ENCODE measurements at regions of chr10 and their contacts with region 1.

Region 1: DNA sequence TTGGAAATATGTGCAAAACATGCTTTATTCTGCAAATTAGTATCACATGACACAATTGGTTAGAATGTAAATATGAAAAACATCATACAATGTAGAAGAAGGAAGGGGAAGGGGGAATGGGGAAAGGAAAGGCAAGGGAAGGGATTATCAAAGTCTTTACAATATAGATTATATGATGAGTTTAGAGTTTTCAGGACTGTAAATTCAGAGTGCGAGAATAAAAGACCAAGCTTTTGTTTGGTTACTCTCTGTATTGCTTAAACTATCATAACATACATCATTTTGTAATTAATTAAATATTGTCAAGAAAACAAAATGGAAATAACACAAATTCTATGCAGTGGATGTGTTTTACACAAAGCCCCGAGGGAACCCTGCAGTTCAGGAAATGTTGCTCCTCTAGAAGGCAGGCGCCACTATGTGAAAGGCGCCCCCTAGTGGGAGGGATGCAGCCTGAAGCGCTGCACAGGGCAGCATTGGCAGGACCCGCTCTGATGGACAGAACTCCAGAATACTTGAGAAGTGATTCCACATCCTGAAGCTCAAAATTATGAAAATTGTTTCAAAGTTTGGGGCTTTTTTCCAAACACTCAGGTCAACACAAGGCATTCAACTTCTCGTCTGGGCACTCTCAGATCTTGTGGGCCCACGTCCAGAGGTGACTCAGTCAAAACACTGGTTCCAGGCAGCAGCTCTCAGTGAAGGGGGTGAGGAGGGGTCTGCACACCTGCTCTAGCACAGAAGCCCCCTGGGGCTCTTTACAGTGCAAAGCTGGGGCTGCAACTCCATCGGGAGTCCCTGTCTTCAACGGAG is 31.6 kb upstream of the TMEM254 start:
- DNase-seq: peak; percentile 34 to 81 (median 69)
- ATAC-seq: peak; percentile 77
- H3K4me3 ChIP-seq: no peak overlapping the region
- H3K4me3 Mint-ChIP-seq: no peak overlapping the region
- H3K27ac ChIP-seq: no peak overlapping the region
- H3K27ac Mint-ChIP-seq: no peak overlapping the region
- H3K4me1 ChIP-seq: no peaks in the 10 kb centered on the region
- H3K4me1 Mint-ChIP-seq: peaks cover 1% of the 10 kb centered on the region
- H3K27me3 ChIP-seq: no peaks in the 10 kb centered on the region
- H3K27me3 Mint-ChIP-seq: no peaks in the 10 kb centered on the region
- CTCF ChIP-seq: peak; percentile 96

Region 2: GRCh38 chr10:79542626-79543025 is 504.2 kb before region 1 on chr10:
- CTCF ChIA-PET with region 1: no interaction called
- POLR2A ChIA-PET with region 1: no interaction called
- intact Hi-C with region 1: loop called in 1 of 2 experiments (anchors 5 kb)
- DNase-seq: no peak
- ATAC-seq: no peak
- H3K4me3 ChIP-seq: no peak overlapping the region
- H3K4me3 Mint-ChIP-seq: no peak overlapping the region
- H3K27ac ChIP-seq: no peak overlapping the region
- H3K27ac Mint-ChIP-seq: no peak overlapping the region
- H3K4me1 ChIP-seq: no peaks in the 10 kb centered on the region
- H3K4me1 Mint-ChIP-seq: no peaks in the 10 kb centered on the region
- H3K27me3 ChIP-seq: no peaks in the 10 kb centered on the region
- H3K27me3 Mint-ChIP-seq: no peaks in the 10 kb centered on the region
- CTCF ChIP-seq: no peak

Region 3: GRCh38 chr10:79562135-79562756 is 484.6 kb before region 1 on chr10:
- CTCF ChIA-PET with region 1: no interaction called
- POLR2A ChIA-PET with region 1: no interaction called
- intact Hi-C with region 1: loop called (anchors 2 to 10 kb)
- DNase-seq: peak; percentile 18 to 73 (median 51)
- ATAC-seq: peak; percentile 51
- H3K4me3 ChIP-seq: no peak overlapping the region
- H3K4me3 Mint-ChIP-seq: no peak overlapping the region
- H3K27ac ChIP-seq: no peak overlapping the region
- H3K27ac Mint-ChIP-seq: no peak overlapping the region
- H3K4me1 ChIP-seq: no peaks in the 10 kb centered on the region
- H3K4me1 Mint-ChIP-seq: peaks cover 2% of the 10 kb centered on the region
- H3K27me3 ChIP-seq: peaks cover 0 to 2% of the 10 kb centered on the region in 2 experiments
- H3K27me3 Mint-ChIP-seq: peaks cover 28% of the 10 kb centered on the region
- CTCF ChIP-seq: peak; percentile 60

Region 4: DNA sequence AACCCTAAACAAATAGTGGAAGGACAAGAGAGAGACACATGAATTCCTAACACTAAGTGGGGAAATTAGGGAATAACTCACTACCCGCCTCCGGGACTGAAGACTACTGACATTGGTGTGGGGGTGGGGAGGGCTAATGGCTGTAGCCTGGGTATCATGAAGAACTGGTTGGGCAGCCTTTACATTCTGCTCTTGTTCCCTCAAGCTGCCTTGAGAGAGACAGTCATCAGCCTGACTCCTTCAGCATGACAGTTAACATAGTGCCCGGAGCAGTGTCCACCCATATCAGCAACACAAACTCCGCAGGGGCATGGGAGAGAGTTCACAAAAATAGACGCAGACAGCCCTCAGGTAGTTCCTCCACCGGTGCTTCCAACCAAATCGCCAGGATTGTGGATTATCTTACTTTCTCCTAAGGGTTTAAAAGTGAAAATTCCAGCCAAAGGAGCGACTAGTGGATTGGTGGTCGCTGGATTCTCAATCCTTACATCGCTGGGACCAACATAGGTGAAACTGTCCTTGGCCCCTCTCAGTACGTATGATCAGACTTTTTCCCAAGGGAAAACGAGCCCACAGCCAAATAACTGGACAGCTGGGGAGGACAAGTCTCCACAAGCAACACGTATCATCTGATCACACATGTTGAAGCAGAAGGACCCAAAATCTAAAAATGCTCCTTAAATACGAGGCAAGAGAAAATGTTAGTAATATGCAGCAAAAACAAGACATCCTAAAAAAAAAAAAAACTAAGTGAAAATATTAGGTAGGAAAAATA is 54.3 kb after region 1 on chr10:
- CTCF ChIA-PET with region 1: no interaction called
- POLR2A ChIA-PET with region 1: no interaction called
- intact Hi-C with region 1: no loop called
- DNase-seq: no peak
- ATAC-seq: no peak
- H3K4me3 ChIP-seq: no peak overlapping the region
- H3K4me3 Mint-ChIP-seq: no peak overlapping the region
- H3K27ac ChIP-seq: no peak overlapping the region
- H3K27ac Mint-ChIP-seq: no peak overlapping the region
- H3K4me1 ChIP-seq: peaks cover 7% of the 10 kb centered on the region
- H3K4me1 Mint-ChIP-seq: peaks cover 8% of the 10 kb centered on the region
- H3K27me3 ChIP-seq: no peaks in the 10 kb centered on the region
- H3K27me3 Mint-ChIP-seq: peaks cover 7% of the 10 kb centered on the region
- CTCF ChIP-seq: no peak

Region 5: GRCh38 chr10:80197972-80198916 is 151.4 kb after region 1 on chr10:
- CTCF ChIA-PET with region 1: no interaction called
- POLR2A ChIA-PET with region 1: no interaction called
- intact Hi-C with region 1: no loop called
- DNase-seq: peak in 1 of 9 experiments; percentile 32
- ATAC-seq: no peak
- H3K4me3 ChIP-seq: peak overlapping the region in 1 of 2 experiments; percentile 18
- H3K4me3 Mint-ChIP-seq: peak overlapping the region; percentile 67
- H3K27ac ChIP-seq: peak overlapping the region in 1 of 2 experiments; percentile 42
- H3K27ac Mint-ChIP-seq: peak overlapping the region; percentile 87
- H3K4me1 ChIP-seq: peaks cover 87% of the 10 kb centered on the region
- H3K4me1 Mint-ChIP-seq: peaks cover 91% of the 10 kb centered on the region
- H3K27me3 ChIP-seq: no peaks in the 10 kb centered on the region
- H3K27me3 Mint-ChIP-seq: no peaks in the 10 kb centered on the region
- CTCF ChIP-seq: no peak